ENCODE measurements at regions of chr18 and their contacts with region 1.

Region 1: DNA sequence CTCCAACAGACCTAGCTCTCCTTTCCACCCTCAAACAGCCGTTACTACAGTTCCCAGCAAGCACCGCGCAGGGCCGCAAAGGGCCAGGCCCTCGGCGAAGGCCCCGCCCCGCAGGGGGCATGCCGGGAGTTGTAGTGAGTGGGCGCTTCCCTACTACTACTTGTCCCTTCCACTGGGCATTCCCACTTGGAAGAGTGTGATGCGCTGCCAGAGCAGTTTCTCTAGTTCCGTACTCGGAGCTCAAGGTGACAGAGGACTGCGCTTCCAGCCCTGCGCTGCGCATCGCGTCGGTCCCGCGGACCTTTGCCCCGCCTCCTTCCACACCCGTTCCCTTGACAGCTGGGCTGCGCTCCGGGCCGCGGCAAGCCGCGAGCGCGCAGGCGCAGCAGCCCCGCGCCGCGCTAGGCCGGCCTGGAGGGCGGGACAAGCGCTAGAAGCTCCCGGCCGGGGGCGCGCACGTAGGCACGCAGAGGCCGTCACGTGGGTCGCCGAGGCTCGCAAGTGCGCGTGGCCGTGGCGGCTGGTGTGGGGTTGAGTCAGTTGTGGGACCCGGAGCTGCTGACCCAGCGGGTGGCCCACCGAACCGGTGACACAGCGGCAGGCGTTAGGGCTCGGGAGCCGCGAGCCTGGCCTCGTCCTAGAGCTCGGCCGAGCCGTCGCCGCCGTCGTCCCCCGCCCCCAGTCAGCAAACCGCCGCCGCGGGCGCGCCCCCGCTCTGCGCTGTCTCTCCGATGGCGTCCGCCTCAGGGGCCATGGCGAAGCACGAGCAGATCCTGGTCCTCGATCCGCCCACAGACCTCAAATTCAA is at the start of gene VAPA:
- DNase-seq: peak; percentile 95
- H3K4me3 Mint-ChIP-seq: peak within 1 kb of the TSS; percentile 84
- H3K27ac Mint-ChIP-seq: peak within 1 kb of the TSS; percentile 91
- H3K4me1 Mint-ChIP-seq: peaks cover 25% of the 10 kb centered on the region
- H3K27me3 Mint-ChIP-seq: peaks cover 3% of the 10 kb centered on the region
- total RNA-seq, gene VAPA: 152 to 159 TPM

Region 2: DNA sequence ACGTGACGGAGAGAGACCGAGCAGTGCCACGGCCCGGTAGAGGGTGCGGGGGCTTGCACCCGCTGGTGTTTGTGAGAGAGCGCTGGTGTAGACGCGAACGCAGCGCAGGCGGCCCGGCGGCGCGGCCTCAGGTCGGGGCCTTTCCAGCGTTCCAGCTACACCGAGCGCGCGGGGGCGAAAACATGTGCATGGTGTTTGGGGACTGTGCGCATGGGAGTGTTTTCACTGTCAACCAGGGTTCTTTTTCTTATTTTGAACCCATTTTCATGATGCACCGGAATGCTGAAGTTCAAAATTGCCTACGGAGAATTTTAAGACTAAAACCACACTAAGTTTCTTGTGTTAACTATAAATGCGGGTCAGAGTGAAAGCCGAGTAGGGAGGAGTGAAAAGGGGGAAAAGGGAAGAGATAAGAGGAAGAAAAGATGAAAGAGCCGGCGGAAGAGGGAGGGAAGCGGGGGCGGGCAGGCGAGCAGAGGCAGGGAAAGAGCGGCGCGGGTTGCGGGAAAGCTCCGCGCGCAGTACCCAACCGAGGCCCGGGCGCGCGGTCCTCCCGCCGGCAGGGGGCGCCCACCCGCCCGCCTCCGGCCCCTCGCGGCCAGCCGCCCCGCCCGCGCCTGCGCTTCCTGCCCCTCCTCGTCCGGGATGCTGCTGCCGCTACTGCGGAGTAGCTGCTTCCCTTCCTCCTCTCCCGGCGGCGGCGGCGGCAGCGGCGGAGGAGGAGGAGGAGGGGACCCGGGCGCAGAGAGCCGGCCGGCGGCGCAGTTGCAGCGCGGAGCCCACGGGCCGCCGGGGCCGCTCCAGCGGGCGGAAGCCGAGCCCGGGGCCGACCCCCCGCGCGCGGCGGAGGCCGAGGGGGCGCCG is 1304.7 kb before region 1 on chr18 and contains the start of gene RAB12:
- CTCF ChIA-PET with region 1: no interaction called
- POLR2A ChIA-PET with region 1: no interaction called
- intact Hi-C with region 1: loop called (anchors 2 kb)
- DNase-seq: peak; percentile 90
- H3K4me3 Mint-ChIP-seq: peak within 1 kb of the TSS; percentile 88
- H3K27ac Mint-ChIP-seq: peak within 1 kb of the TSS; percentile 90
- H3K4me1 Mint-ChIP-seq: peaks cover 48% of the 10 kb centered on the region
- H3K27me3 Mint-ChIP-seq: peaks cover 2% of the 10 kb centered on the region
- total RNA-seq, gene RAB12: 9.4 to 10.1 TPM

Region 3: GRCh38 chr18:9474983-9475642 is 438.6 kb before region 1 on chr18 and contains the start of gene RALBP1:
- CTCF ChIA-PET with region 1: no interaction called
- POLR2A ChIA-PET with region 1: no interaction called
- intact Hi-C with region 1: loop called (anchors 1 kb)
- DNase-seq: peak; percentile 99
- H3K4me3 Mint-ChIP-seq: peak within 1 kb of the TSS; percentile 92
- H3K27ac Mint-ChIP-seq: peak within 1 kb of the TSS; percentile 93
- H3K4me1 Mint-ChIP-seq: peaks cover 28% of the 10 kb centered on the region
- H3K27me3 Mint-ChIP-seq: peaks cover 11% of the 10 kb centered on the region
- total RNA-seq, gene RALBP1: 53.1 to 54.7 TPM

Region 4: DNA sequence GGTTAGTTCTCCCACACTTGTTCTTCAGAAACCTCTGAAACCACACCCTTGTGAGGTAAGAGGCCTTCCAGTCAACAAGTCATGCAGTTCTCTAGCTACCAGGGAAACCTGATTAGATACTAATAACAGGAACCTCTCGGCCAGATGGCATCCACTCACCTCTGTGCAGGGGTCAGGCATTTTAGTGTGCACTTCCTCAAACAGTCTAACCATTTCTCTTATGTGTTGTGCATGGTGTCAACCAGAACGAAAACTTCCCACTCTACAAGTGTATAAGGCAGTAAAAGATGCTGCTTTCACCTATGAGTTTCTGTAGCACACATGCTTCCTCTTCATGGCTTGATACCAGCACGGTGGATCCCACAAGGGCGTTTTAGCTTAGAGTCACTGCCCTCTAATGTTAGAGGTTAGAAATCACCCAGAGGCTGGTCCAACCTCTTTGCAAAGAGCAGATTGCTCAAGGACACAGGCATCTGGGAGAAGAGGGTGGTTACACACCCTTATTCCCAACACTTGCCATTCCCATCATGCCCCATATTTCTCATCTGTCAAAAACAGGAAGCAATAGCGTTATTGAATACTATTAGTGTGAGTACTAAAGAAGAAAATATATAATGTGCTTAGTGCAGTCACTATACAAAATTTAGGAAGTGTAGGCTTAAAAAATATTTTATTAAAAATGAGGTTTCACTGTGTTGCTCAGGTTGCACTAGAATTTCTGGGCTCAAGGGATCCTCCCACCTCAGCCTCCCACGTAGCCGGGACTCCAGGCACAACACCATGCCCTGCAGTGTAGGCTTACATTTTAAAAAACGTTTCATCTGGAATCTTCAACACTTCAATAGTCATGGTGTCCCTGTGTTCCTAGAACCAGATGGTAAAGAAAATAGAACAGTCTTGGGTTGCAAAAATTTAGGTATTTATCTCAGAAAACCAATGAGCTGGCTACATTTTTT is 240.2 kb before region 1 on chr18:
- CTCF ChIA-PET with region 1: no interaction called
- POLR2A ChIA-PET with region 1: no interaction called
- intact Hi-C with region 1: loop called (anchors 5 kb)
- DNase-seq: peak; percentile 54
- H3K4me3 Mint-ChIP-seq: no peak overlapping the region
- H3K27ac Mint-ChIP-seq: peak overlapping the region; percentile 78
- H3K4me1 Mint-ChIP-seq: peaks cover 6% of the 10 kb centered on the region
- H3K27me3 Mint-ChIP-seq: peaks cover 10% of the 10 kb centered on the region

Region 5: GRCh38 chr18:9861157-9861556 is 52.6 kb before region 1 on chr18:
- CTCF ChIA-PET with region 1: interaction called, 4 read pairs
- POLR2A ChIA-PET with region 1: interaction called, 14 read pairs
- intact Hi-C with region 1: no loop called
- DNase-seq: no peak
- H3K4me3 Mint-ChIP-seq: no peak overlapping the region
- H3K27ac Mint-ChIP-seq: no peak overlapping the region
- H3K4me1 Mint-ChIP-seq: peaks cover 19% of the 10 kb centered on the region
- H3K27me3 Mint-ChIP-seq: peaks cover 29% of the 10 kb centered on the region

Region 6: DNA sequence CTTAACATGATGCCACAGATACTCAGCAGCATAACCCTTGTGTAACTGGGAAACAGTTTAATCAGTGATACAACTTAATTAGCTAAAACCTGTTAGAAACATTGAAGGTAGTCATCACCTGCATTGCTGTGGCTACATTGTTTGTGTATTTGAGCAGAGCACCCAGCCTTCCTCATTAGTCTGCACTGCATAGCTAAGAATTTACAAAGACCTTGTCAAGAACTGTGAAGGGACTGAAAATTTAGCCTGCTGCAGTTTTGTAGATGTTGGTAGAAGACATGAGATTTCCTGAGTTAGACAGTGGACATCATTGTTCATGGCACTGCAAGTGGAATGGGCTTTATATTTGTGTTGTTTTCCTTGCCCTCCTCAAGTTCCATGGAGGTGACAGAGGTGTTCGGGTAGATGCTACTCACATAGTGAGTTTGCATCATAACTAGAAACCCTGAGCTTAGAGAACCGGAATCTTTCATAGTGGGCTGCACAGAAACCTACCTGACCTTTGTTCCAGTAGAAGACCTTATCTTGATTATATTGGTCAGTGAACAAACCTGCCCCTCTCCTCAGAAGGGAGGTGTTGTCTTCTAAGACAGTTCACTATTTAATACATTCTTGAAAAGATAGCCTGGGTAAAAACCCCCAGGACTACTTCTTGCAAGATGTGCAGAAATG is 12.6 kb after region 1 on chr18:
- CTCF ChIA-PET with region 1: no interaction called
- POLR2A ChIA-PET with region 1: interaction called, 14 read pairs
- intact Hi-C with region 1: no loop called
- DNase-seq: no peak
- H3K4me3 Mint-ChIP-seq: no peak overlapping the region
- H3K27ac Mint-ChIP-seq: peak overlapping the region; percentile 30
- H3K4me1 Mint-ChIP-seq: peaks cover 75% of the 10 kb centered on the region
- H3K27me3 Mint-ChIP-seq: no peaks in the 10 kb centered on the region

Region 7: DNA sequence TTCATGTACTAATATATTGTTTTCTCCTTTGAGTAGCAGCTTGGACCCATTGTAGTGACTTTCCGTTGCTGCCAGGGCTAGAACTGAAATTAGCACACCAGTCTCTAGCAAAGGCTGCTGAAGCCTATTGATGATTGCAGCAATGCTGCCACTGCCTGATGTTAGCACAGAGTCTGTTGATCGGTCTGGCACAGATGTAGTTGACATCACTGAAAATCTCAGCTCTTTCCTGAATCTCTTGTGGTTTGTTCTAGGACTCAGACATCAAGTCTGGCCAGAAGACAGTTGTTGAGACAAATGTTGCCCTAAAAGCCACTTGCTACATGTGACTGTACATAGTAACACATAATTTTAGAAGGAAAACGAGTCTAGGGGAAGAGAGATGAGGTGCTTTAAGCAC is 47.3 kb after region 1 on chr18:
- CTCF ChIA-PET with region 1: no interaction called
- POLR2A ChIA-PET with region 1: no interaction called
- intact Hi-C with region 1: no loop called
- DNase-seq: no peak
- H3K4me3 Mint-ChIP-seq: no peak overlapping the region
- H3K27ac Mint-ChIP-seq: no peak overlapping the region
- H3K4me1 Mint-ChIP-seq: peaks cover 16% of the 10 kb centered on the region
- H3K27me3 Mint-ChIP-seq: no peaks in the 10 kb centered on the region

Region 8: DNA sequence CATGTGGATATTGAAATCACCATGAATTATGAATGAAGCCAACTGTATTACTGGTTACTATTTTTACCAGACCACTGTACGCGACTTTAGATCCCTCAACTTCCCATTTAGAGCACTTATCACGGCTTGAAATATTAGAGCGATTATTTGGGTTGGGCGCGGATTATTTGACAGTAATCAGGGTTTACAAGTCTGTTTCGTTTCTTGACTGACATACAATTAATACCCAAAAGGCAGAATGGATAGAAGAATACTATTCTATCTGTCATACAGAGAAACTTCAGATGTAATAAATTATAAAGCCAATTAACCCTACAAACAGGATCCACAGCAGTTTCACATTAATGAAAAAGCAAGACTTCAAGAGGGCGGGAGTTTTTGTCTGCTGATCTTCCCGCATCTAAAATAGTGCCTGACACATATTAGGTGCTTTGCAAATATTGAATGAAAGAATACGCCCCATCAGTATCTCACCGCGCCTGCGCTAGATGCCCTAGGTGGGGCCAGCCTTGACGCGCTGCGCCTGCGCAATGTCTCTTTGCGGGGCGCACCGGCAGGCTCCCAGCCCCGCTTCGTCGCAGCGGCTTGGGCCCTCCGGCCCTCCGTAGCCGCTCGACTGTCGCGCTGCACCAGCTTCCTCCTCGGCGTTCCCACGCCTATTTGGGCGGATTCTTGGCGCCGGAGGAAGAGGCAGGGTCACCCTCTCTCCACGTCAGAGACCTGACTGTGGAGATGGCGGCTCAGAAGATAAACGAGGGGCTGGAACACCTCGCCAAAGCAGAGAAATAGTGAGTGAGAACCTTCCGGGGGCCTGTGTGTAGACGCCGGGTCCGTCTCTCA is 611.9 kb after region 1 on chr18 and contains the start of gene NAPG:
- CTCF ChIA-PET with region 1: no interaction called
- POLR2A ChIA-PET with region 1: no interaction called
- intact Hi-C with region 1: loop called (anchors 1 kb)
- DNase-seq: peak; percentile 93
- H3K4me3 Mint-ChIP-seq: peak within 1 kb of the TSS; percentile 94
- H3K27ac Mint-ChIP-seq: peak within 1 kb of the TSS; percentile 95
- H3K4me1 Mint-ChIP-seq: peaks cover 45% of the 10 kb centered on the region
- H3K27me3 Mint-ChIP-seq: no peaks in the 10 kb centered on the region
- total RNA-seq, gene NAPG: 31.8 to 32.7 TPM